CD4-positive, alpha-beta T cell (primary cell): ENCODE measurements at regions of chr17 and their contacts with region 1.

Region 1: GRCh38 chr17:29918922-29919856 is 10.8 kb downstream of the SSH2 start:
- DNase-seq: no peak
- ATAC-seq: no peak
- H3K4me3 ChIP-seq: no peak overlapping the region
- H3K4me3 Mint-ChIP-seq: no peak overlapping the region
- H3K27ac ChIP-seq: no peak overlapping the region
- H3K27ac Mint-ChIP-seq: no peak overlapping the region
- H3K4me1 ChIP-seq: peaks cover 3% of the 10 kb centered on the region
- H3K4me1 Mint-ChIP-seq: peaks cover 47% of the 10 kb centered on the region
- H3K27me3 ChIP-seq: no peaks in the 10 kb centered on the region
- H3K27me3 Mint-ChIP-seq: no peaks in the 10 kb centered on the region
- CTCF ChIP-seq: no peak

Region 2: DNA sequence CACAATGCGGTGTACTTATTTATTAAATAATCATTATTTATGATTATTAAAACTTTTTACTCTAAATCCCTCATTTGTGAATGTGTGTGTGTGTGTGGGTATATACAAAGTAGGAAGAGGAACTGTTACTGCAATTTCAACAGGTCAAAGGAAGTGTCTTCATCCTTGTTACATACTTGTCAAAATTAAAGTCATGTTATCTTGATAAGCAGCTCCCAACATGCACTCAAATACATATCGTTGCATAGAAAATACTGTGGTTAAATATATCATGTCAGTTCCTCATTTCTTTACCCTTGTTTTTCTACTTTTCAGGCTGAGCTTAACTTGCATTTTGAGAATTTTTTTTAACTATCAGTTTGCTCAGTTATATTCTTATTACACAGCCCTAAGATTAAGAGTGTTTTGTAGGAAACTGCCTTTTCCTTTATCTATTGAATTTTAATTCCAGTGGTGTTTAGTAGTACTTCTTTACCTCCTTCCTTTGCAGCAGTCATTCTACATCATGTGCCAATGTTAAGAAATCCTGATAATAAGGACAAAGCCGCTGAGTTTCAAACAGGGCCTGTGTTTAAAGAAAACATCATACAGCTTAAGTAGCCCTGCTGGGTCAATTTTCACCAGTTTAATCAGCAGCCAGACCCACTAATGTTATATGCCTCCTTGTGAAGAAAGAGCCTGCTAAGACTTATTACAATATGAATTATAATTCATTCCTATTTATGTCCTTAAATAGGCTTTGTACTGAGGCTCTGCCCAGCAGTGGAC is 29.4 kb after region 1 on chr17:
- CTCF ChIA-PET with region 1: no interaction called
- POLR2A ChIA-PET with region 1: no interaction called
- intact Hi-C with region 1: loop called in 1 of 2 experiments (anchors 2 kb)
- DNase-seq: no peak
- ATAC-seq: no peak
- H3K4me3 ChIP-seq: no peak overlapping the region
- H3K4me3 Mint-ChIP-seq: no peak overlapping the region
- H3K27ac ChIP-seq: no peak overlapping the region
- H3K27ac Mint-ChIP-seq: no peak overlapping the region
- H3K4me1 ChIP-seq: no peaks in the 10 kb centered on the region
- H3K4me1 Mint-ChIP-seq: no peaks in the 10 kb centered on the region
- H3K27me3 ChIP-seq: no peaks in the 10 kb centered on the region
- H3K27me3 Mint-ChIP-seq: no peaks in the 10 kb centered on the region
- CTCF ChIP-seq: no peak